ENCODE measurements at regions of chr4 and their contacts with region 1.

Region 1: GRCh38 chr4:602559-602942 is 22.8 kb upstream of the PDE6B start:
- ATAC-seq: peak in 5 of 8 experiments; percentile 27 to 100 (median 99)
- H3K4me3 ChIP-seq: no peak overlapping the region
- H3K27ac ChIP-seq: no peak overlapping the region
- H3K4me1 ChIP-seq: no peaks in the 10 kb centered on the region

Region 2: DNA sequence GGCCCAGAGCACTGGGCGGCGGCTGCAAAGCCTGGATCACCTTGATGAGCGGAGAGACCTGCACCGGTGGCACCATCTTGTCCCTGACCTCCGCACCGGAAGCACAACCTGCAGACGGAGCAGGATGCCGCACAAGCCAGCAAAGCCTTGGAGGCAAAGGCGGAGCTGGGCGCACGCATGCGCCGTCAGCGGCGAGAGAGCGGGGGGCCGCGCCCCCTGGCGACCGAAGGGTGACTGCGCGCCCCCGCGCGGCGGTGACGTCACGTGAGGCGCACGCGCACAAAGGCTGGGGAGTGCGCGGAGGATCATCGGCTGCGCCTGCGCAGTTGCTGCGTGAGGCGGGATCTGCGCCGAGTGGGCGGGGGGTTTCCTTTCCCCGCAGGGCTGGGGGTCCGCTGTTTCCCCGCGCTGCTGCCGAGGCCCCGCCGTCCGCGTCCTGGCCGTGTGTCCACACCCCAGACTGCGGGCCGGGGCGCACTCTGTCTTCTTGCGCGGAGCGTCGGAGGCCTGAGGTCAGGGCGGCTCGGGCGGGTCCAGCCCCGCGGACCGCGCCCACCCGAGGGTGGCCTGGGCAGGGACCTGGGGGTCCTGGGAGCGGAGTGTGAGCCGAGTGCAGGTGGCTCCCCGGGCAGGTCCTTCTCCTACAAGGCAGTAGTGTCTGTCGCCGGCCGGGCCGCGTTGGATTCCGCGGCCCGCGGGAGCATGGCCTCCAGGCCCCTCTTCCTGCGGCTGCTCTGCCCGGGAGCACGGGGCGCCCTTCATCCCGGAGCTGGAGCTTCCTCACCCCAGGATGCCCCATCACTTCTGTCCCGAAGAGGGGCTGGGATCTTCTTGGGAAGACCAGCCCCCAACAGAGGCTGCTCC is 71.9 kb after region 1 on chr4 and contains the starts of genes ATP5ME and MYL5:
- in situ Hi-C with region 1: loop called in 1 of 9 experiments (anchors 5 kb)
- ATAC-seq: peak; percentile 74 to 93 (median 90)
- H3K4me3 ChIP-seq: peak within 1 kb of the TSS; percentile 59 to 94 (median 66)
- H3K27ac ChIP-seq: peak within 1 kb of the TSS; percentile 80 to 89
- H3K4me1 ChIP-seq: peaks cover 11 to 12% of the 10 kb centered on the region in 2 donors
- total RNA-seq, gene ATP5ME: 668 to 891 (median 799) TPM
- total RNA-seq, gene MYL5: 6.7 to 41.2 (median 16.8) TPM